PC-3 (cell line): ENCODE measurements at regions of chrX and their contacts with region 1.

Region 1: GRCh38 chrX:57595381-57595811 is 3.6 kb downstream of the ZXDB start:
- DNase-seq: peak; percentile 84
- ATAC-seq: peak; percentile 11
- H3K4me3 ChIP-seq: peak overlapping the region; percentile 69
- H3K27ac ChIP-seq: peak overlapping the region; percentile 72
- H3K4me1 ChIP-seq: peaks cover 47% of the 10 kb centered on the region
- H3K27me3 ChIP-seq: no peaks in the 10 kb centered on the region
- CTCF ChIP-seq: no peak

Region 2: DNA sequence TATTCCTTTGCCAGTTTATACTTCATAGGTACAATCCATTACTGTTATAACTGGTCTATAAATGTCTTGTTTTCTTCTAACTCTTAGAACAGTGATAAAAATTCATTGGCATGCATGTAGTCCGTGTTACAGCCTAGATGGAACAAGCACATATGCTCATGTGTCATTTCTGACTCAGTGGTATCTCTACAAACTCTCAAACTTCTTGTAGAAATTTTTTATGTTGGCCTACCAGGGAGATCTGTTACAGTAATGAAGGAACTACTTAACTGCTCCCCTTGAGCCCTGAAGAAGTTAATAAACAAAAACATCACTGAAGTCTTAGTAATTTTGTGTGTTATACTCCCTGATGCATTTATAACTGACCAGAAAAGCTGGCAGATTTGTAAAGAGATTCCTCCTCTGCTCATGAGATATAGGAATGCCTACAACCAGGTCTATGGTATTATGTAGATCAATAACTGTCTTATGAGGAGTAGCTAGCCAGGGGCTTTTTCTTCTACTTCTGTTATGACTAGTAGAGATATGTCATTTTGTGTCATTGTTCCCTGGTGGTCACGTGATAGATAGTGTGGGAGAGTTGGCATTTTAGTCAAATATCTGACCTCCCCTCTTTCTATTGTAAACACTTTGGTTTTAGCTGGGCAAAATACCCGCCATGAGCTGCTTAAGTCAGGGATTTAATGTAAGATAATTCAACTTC is 362.6 kb before region 1 on chrX:
- CTCF ChIA-PET with region 1: no interaction called
- POLR2A ChIA-PET with region 1: no interaction called
- intact Hi-C with region 1: no loop called
- DNase-seq: no peak
- ATAC-seq: no peak
- H3K4me3 ChIP-seq: no peak overlapping the region
- H3K27ac ChIP-seq: no peak overlapping the region
- H3K4me1 ChIP-seq: peaks cover 5% of the 10 kb centered on the region
- H3K27me3 ChIP-seq: no peaks in the 10 kb centered on the region
- CTCF ChIP-seq: no peak

Region 3: GRCh38 chrX:57286507-57287251 is 308.7 kb before region 1 on chrX and contains the start of gene FAAH2:
- CTCF ChIA-PET with region 1: no interaction called
- POLR2A ChIA-PET with region 1: no interaction called
- intact Hi-C with region 1: no loop called
- DNase-seq: peak; percentile 87
- ATAC-seq: peak; percentile 77
- H3K4me3 ChIP-seq: peak within 1 kb of the TSS; percentile 83
- H3K27ac ChIP-seq: peak within 1 kb of the TSS; percentile 74
- H3K4me1 ChIP-seq: peaks cover 13% of the 10 kb centered on the region
- H3K27me3 ChIP-seq: no peaks in the 10 kb centered on the region
- CTCF ChIP-seq: no peak
- total RNA-seq, gene FAAH2: 1.6 and 4.5 TPM in 2 replicates

Region 4: GRCh38 chrX:57643698-57644097 is 48.3 kb after region 1 on chrX:
- CTCF ChIA-PET with region 1: no interaction called
- POLR2A ChIA-PET with region 1: no interaction called
- intact Hi-C with region 1: loop called (anchors 10 kb)
- DNase-seq: peak; percentile 26
- ATAC-seq: 0 out of 2 replicates have a peak, but pooled peaks have one; percentile 20
- H3K4me3 ChIP-seq: no peak overlapping the region
- H3K27ac ChIP-seq: no peak overlapping the region
- H3K4me1 ChIP-seq: no peaks in the 10 kb centered on the region
- H3K27me3 ChIP-seq: no peaks in the 10 kb centered on the region
- CTCF ChIP-seq: no peak

Region 5: DNA sequence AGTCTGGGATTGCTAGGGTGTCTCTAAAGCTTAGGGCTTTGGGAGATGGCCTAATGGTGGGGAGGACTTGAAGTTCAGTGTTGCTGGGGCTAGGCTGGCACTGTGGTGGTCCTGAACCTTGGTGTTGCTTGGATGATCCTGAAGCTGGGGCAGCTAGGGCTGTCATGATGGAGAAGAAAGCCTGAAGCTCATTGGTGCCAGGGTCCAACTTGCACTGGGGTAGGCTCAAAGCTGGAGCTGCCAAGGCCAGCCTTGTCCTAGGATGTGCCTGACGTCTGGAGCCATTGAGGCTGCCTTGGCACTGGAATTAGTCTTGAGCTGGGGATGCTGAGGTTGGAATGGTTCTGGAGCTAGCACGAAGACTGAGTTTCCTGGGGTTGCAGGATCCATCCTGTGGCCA is 145.7 kb after region 1 on chrX:
- CTCF ChIA-PET with region 1: no interaction called
- POLR2A ChIA-PET with region 1: no interaction called
- intact Hi-C with region 1: loop called (anchors 1 kb)
- DNase-seq: no peak
- ATAC-seq: no peak
- H3K4me3 ChIP-seq: no peak overlapping the region
- H3K27ac ChIP-seq: no peak overlapping the region
- H3K4me1 ChIP-seq: no peaks in the 10 kb centered on the region
- H3K27me3 ChIP-seq: no peaks in the 10 kb centered on the region
- CTCF ChIP-seq: no peak

Region 6: DNA sequence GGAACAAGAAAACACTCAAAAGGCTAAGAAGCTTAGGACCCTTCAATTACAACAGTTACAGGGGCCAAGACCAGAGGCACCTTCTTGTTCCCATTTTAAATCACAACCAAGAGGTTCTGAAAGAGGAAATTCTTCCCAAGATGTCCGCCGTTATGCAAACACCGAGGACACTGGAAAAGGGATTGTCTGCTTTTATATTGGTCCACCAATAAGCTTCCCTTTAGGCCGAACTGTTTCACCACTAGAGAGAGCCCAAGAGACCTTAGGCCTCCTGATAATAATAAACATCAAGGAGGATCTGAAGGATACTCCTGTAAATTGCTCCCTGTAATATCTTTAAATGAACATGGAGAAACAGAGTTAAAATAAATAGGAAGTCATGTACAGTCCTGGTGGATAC is 177.2 kb after region 1 on chrX:
- CTCF ChIA-PET with region 1: interaction called, 8 read pairs
- POLR2A ChIA-PET with region 1: no interaction called
- intact Hi-C with region 1: loop called (anchors 5 kb)
- DNase-seq: peak; percentile 4
- ATAC-seq: no peak
- H3K4me3 ChIP-seq: no peak overlapping the region
- H3K27ac ChIP-seq: no peak overlapping the region
- H3K4me1 ChIP-seq: peaks cover 8% of the 10 kb centered on the region
- H3K27me3 ChIP-seq: no peaks in the 10 kb centered on the region
- CTCF ChIP-seq: peak; percentile 30; the same call in 1 of the 2 replicates

Region 7: GRCh38 chrX:57906790-57907189 is 311.4 kb after region 1 on chrX:
- CTCF ChIA-PET with region 1: no interaction called
- POLR2A ChIA-PET with region 1: no interaction called
- intact Hi-C with region 1: loop called (anchors 5 kb)
- DNase-seq: no peak
- ATAC-seq: no peak
- H3K4me3 ChIP-seq: no peak overlapping the region
- H3K27ac ChIP-seq: no peak overlapping the region
- H3K4me1 ChIP-seq: peaks cover 6% of the 10 kb centered on the region; the same call in 1 of the 2 replicates
- H3K27me3 ChIP-seq: no peaks in the 10 kb centered on the region
- CTCF ChIP-seq: no peak